Activated CD4-positive, alpha-beta T cell treated with anti-CD3 and anti-CD28 coated beads, Interleukin-2, amount 10 ng/mL, durations not matched to agents 24 days and 14 days (primary cell): ENCODE measurements at regions of chr5 and their contacts with region 1.

Region 1: GRCh38 chr5:143002459-143003328 is 232.5 kb downstream of the ARHGAP26 start:
- DNase-seq: peak; percentile 90
- H3K4me3 Mint-ChIP-seq: peak overlapping the region; percentile 76
- H3K27ac Mint-ChIP-seq: peak overlapping the region; percentile 99
- H3K4me1 Mint-ChIP-seq: peaks cover 69% of the 10 kb centered on the region
- H3K27me3 Mint-ChIP-seq: no peaks in the 10 kb centered on the region

Region 2: GRCh38 chr5:142977363-142978051 is 25.2 kb before region 1 on chr5:
- intact Hi-C with region 1: loop called (anchors 1 kb)
- DNase-seq: peak; percentile 85
- H3K4me3 Mint-ChIP-seq: peak overlapping the region; percentile 78
- H3K27ac Mint-ChIP-seq: peak overlapping the region; percentile 91
- H3K4me1 Mint-ChIP-seq: peaks cover 55% of the 10 kb centered on the region
- H3K27me3 Mint-ChIP-seq: no peaks in the 10 kb centered on the region

Region 3: GRCh38 chr5:143262393-143263174 is 259.9 kb after region 1 on chr5:
- intact Hi-C with region 1: loop called (anchors 5 kb)
- DNase-seq: no peak
- H3K4me3 Mint-ChIP-seq: no peak overlapping the region
- H3K27ac Mint-ChIP-seq: no peak overlapping the region
- H3K4me1 Mint-ChIP-seq: peaks cover 12% of the 10 kb centered on the region
- H3K27me3 Mint-ChIP-seq: no peaks in the 10 kb centered on the region

Region 4: DNA sequence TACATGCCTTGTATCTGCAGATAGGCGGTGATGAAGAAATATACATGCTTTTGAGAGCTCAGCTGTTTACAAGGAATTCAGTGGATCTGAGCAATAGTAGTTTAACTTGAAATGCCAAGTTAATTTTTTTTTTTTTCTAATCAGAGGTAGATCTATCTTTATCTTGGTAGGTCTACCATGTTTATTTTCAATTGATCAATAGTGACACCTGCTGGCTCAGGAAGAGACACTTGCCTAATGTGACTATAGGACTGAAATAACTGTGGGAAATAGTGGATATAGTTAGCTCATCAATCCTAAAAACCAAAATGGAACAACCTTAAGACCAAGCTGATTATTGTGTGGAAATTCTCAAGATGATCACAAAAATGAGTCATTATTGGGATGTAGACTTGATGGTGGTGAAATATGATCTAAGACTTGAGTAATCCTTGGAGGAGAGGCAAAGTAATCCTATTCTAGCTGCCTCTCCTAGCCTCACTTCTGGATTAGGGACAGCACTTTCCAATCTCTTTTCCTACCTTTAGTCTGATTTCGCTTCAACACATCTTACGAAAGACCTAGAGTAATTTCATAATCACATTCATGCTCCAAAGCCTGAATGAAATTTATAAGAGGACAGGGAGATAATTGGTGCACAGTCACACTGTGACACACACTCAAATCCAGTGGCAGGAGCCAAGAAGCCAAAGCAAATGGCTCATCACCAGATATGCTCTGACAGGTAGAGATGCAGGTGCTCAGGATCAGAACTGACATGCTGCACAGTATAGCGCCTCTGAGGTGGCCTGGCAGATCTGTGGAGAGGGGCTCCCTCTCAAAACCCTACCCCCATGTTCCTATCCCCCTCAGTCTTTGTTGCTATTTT is 965.6 kb after region 1 on chr5:
- intact Hi-C with region 1: loop called (anchors 1 kb)
- DNase-seq: peak; percentile 74
- H3K4me3 Mint-ChIP-seq: no peak overlapping the region
- H3K27ac Mint-ChIP-seq: no peak overlapping the region
- H3K4me1 Mint-ChIP-seq: peaks cover 3% of the 10 kb centered on the region
- H3K27me3 Mint-ChIP-seq: peaks cover 34% of the 10 kb centered on the region